Endothelial cell of umbilical vein (primary cell): ENCODE measurements at regions of chr22 and their contacts with region 1.

Region 1: DNA sequence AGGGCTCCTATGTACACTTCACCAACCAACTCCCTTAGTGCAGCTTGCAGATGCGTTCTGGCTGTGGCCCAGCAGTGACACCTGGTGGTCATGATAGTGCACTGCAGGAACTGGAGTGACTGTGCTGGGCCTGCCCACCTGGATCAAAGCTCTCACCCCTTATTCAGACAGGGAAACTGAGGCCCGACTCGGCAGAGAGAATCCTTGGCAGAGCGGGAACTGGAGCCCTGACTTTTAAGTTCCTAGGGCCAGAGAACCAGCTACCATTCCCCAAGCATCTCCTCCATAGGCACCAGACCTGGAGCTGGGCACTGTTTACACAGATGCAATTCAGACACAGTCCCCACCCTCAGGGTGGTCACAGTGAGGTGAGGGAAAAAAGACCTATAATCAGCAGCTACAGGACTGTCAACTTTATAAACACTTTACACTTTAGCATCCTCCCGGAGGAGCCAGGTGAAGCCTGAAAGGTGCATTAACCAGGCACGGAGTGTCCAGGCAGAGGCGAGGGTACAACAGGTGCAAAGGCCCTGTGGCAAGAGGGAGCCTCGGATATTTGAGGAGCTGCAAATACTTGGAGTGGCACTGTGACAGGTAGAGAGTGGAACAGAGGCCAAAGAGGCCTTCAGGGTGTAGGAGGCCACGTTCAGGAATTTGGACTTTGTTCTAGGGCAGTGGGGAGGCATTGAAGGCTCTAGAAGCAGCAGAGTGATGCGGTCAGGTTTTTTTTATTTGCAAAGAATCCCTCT is 22.0 kb downstream of the RHBDD3 start:
- DNase-seq: peak; percentile 58
- H3K4me3 ChIP-seq: no peak overlapping the region
- H3K27ac ChIP-seq: no peak overlapping the region
- H3K4me1 ChIP-seq: no peaks in the 10 kb centered on the region
- H3K27me3 ChIP-seq: peaks cover 3 to 5% of the 10 kb centered on the region in 2 experiments
- CTCF ChIP-seq: peak; percentile 91 to 97
- POLR2A ChIP-seq: no peak

Region 2: GRCh38 chr22:29154364-29155048 is 91.3 kb before region 1 on chr22:
- CTCF ChIA-PET with region 1: interaction called, 65 read pairs
- POLR2A ChIA-PET with region 1: no interaction called
- dilution Hi-C with region 1: no loop called
- intact Hi-C with region 1: loop called (anchors 1 kb)
- DNase-seq: peak; percentile 74
- H3K4me3 ChIP-seq: no peak overlapping the region
- H3K27ac ChIP-seq: no peak overlapping the region
- H3K4me1 ChIP-seq: no peaks in the 10 kb centered on the region
- H3K27me3 ChIP-seq: peaks cover 0 to 14% of the 10 kb centered on the region in 2 experiments
- CTCF ChIP-seq: peak; percentile 81 to 98
- POLR2A ChIP-seq: no peak

Region 3: GRCh38 chr22:29225422-29226131 is 20.2 kb before region 1 on chr22:
- CTCF ChIA-PET with region 1: interaction called, 18 read pairs
- POLR2A ChIA-PET with region 1: no interaction called
- dilution Hi-C with region 1: no loop called
- intact Hi-C with region 1: no loop called
- DNase-seq: peak; percentile 49
- H3K4me3 ChIP-seq: no peak overlapping the region
- H3K27ac ChIP-seq: no peak overlapping the region
- H3K4me1 ChIP-seq: no peaks in the 10 kb centered on the region
- H3K27me3 ChIP-seq: no peaks in the 10 kb centered on the region
- CTCF ChIP-seq: no peak
- POLR2A ChIP-seq: no peak

Region 4: DNA sequence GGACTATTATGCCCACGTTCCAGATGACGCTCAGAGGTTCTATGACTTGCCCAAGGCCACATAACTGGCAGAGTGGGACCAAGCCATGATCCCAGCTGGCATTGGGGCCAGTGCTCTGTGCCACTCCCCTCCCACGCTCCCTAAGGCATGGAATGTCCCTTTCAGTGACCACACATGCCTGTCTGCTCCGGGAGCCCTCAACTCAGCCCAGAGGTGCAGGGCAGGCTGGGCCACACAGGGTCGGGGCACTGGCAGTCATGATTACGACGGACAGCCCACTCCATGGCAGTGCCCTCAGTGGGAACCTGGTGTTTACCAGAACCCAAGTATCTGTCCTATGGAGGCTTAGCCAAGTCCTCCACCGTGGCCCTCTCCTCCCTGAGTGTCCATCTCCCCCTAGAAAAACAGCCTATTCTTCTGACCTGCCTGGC is 12.0 kb after region 1 on chr22:
- CTCF ChIA-PET with region 1: interaction called, 13 read pairs
- POLR2A ChIA-PET with region 1: interaction called, 3 read pairs
- dilution Hi-C with region 1: no loop called
- intact Hi-C with region 1: no loop called
- DNase-seq: no peak
- H3K4me3 ChIP-seq: no peak overlapping the region
- H3K27ac ChIP-seq: no peak overlapping the region
- H3K4me1 ChIP-seq: no peaks in the 10 kb centered on the region
- H3K27me3 ChIP-seq: no peaks in the 10 kb centered on the region
- CTCF ChIP-seq: no peak
- POLR2A ChIP-seq: no peak

Region 5: DNA sequence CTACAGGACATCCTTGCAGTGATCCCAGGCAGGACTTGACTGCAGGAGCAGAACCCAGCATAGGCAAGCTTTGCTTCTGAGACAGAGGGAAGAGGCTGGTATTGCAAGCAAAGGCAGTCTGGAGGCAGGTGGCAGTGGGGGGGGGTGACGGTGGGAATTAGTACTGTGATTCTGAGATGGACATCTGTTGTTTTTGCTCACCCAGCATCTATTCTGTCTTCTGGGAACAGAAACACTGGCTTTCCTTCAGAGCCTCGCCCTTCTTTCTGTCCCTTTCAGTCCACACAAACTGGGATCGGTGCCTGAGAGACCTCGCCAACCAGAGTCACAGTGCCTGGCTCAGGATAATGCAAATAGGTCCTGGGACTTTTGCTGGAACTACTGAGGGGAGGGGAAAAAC is 100.8 kb after region 1 on chr22:
- CTCF ChIA-PET with region 1: no interaction called
- POLR2A ChIA-PET with region 1: no interaction called
- dilution Hi-C with region 1: no loop called
- intact Hi-C with region 1: no loop called
- DNase-seq: no peak
- H3K4me3 ChIP-seq: no peak overlapping the region
- H3K27ac ChIP-seq: no peak overlapping the region
- H3K4me1 ChIP-seq: no peaks in the 10 kb centered on the region
- H3K27me3 ChIP-seq: no peaks in the 10 kb centered on the region
- CTCF ChIP-seq: no peak
- POLR2A ChIP-seq: no peak